Heart right ventricle (tissue), 16 donors: ENCODE measurements at regions of chr22 and their contacts with region 1.

Region 1: GRCh38 chr22:37544955-37545699 is 15.2 kb upstream of the CDC42EP1 start:
- DNase-seq: peak; percentile 77 to 81
- ATAC-seq: peak; percentile 37 to 75 (median 46)
- H3K4me3 ChIP-seq: peak overlapping the region in 7 of 10 donors; percentile 4 to 44 (median 35)
- H3K27ac ChIP-seq: peak overlapping the region; percentile 84 to 96 (median 92)
- H3K4me1 ChIP-seq: peaks cover 21 to 55% (median 44%) of the 10 kb centered on the region in 9 donors
- H3K27me3 ChIP-seq: peaks cover 0 to 2% (median 0%) of the 10 kb centered on the region in 7 donors
- CTCF ChIP-seq: peak; percentile 45 to 83 (median 75)

Region 2: DNA sequence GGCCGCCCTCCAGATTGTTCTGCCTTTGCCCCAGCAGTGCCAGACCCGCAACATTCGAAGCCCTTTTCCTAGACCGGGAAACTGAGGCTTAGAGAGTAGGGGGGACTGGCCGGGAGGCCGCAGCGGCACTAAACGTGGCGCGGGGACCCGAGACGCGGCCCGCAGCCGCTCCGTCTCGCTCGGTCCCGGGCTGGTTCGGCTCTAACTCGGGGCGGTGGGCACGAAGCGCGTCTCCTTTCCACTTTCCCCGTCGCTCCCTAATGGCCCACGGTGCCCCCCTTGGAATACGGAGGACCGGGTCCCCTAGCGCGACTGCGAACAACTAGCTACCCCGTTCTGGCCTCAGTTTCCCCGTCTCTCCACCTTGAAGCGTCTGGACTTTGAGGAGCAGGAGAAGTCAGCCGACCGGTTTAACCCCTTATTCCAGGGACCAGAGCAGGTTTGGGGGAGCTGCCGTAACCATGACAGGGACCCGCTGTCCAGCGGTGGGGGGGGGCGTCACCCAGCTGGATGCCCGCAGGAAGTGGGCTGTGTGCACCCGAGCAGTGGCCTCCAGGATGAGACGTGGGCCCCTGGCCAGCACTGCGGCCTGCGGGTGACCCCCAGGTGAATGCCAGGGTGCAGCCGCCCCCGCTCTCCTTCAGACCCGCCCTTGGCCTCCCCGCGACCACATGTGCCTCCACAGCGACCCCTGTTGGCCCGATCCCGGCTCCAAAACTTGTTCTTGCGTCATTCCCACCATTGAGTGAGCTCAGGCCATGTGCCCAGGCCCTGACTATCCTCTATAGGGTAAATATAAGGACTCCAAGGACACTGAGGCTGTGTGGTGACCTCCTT is 16.3 kb after region 1 on chr22:
- intact Hi-C with region 1: loop called in 7 of 10 experiments (anchors 1 to 2 kb)
- DNase-seq: peak; percentile 92 to 95
- ATAC-seq: peak; percentile 50 to 79 (median 72)
- H3K4me3 ChIP-seq: peak overlapping the region; percentile 61 to 92 (median 74)
- H3K27ac ChIP-seq: peak overlapping the region; percentile 96 to 100 (median 99)
- H3K4me1 ChIP-seq: peaks cover 20 to 91% (median 83%) of the 10 kb centered on the region in 9 donors
- H3K27me3 ChIP-seq: peaks cover 0 to 54% (median 4%) of the 10 kb centered on the region in 7 donors
- CTCF ChIP-seq: peak; percentile 67 to 91 (median 86)

Region 3: GRCh38 chr22:37566903-37567820 is 22.0 kb after region 1 on chr22:
- intact Hi-C with region 1: loop called in 5 of 10 experiments (anchors 1 to 2 kb)
- DNase-seq: peak; percentile 79 to 84
- ATAC-seq: peak; percentile 36 to 81 (median 60)
- H3K4me3 ChIP-seq: no peak overlapping the region
- H3K27ac ChIP-seq: peak overlapping the region in 9 of 10 donors; percentile 17 to 100 (median 96)
- H3K4me1 ChIP-seq: peaks cover 23 to 85% (median 62%) of the 10 kb centered on the region in 9 donors
- H3K27me3 ChIP-seq: peaks cover 0 to 11% (median 0%) of the 10 kb centered on the region in 7 donors
- CTCF ChIP-seq: peak; percentile 87 to 96 (median 94)

Region 4: DNA sequence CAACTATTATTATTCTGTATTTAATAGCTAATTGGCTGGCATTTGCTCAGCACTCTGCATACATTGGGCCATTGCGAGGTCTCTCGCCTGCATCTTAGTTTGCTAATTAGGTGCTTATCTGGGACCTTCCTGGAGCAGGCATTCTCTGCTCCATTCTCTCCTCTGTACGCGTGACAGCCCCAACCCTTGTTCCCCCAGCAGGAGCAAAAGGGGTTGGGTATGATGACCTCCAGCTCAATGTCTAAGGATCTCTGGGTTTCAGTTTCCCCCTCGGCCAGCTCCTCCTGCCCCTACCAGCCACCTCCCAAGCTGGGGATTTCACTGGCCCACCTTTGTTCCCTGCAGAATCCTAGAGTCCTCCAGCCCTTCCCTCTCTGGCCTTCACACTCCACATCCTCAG is 44.5 kb after region 1 on chr22:
- intact Hi-C with region 1: loop called in 3 of 10 experiments (anchors 2 to 5 kb)
- DNase-seq: no peak
- ATAC-seq: no peak
- H3K4me3 ChIP-seq: no peak overlapping the region
- H3K27ac ChIP-seq: peak overlapping the region in 1 of 10 donors; percentile 70
- H3K4me1 ChIP-seq: peaks cover 0 to 27% (median 3%) of the 10 kb centered on the region in 9 donors
- H3K27me3 ChIP-seq: no peaks in the 10 kb centered on the region
- CTCF ChIP-seq: no peak

Region 5: GRCh38 chr22:37599153-37599552 is 54.0 kb after region 1 on chr22:
- intact Hi-C with region 1: loop called in 1 of 10 experiments (anchors 5 kb)
- DNase-seq: peak in 1 of 2 donors; percentile 29
- ATAC-seq: peak in 5 of 8 donors; percentile 16 to 33 (median 27)
- H3K4me3 ChIP-seq: no peak overlapping the region
- H3K27ac ChIP-seq: no peak overlapping the region
- H3K4me1 ChIP-seq: peaks cover 0 to 8% (median 0%) of the 10 kb centered on the region in 9 donors
- H3K27me3 ChIP-seq: peaks cover 0 to 9% (median 0%) of the 10 kb centered on the region in 7 donors
- CTCF ChIP-seq: no peak

Region 6: DNA sequence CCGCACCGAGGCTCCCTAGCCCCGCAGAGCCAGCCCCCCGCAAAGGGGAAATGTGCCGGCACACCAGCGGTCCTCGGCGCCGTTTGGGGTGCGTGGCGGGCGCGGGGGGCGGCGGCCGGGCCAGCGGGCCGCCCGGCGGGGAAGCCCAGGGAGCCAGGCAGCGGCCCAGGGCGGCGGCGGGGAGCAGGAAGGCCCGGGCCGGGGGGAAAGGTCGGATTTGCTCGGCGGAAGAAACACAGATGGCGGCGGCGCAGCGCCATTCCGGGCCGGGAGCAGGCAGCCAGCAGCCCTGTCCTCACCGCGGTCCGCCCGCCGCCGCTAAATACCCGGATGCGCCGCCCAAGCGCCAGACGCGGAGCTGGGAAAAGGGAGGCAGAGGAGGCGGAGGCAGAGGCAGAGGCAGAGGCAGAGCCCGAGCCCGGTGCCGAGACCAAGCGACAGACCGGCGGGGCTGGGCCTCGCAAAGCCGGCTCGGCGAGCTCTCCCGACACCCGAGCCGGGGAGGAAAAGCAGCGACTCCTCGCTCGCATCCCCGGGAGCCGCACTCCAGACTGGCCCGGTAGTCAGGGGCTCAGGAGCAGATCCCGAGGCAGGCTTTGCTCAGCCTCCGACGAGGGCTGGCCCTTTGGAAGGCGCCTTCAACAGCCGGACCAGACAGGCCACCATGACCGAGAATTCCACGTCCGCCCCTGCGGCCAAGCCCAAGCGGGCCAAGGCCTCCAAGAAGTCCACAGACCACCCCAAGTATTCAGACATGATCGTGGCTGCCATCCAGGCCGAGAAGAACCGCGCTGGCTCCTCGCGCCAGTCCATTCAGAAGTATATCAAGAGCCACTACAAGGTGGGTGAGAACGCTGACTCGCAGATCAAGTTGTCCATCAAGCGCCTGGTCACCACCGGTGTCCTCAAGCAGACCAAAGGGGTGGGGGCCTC is 260.0 kb after region 1 on chr22:
- intact Hi-C with region 1: no loop called
- DNase-seq: peak; percentile 93
- ATAC-seq: peak; percentile 59 to 74 (median 68)
- H3K4me3 ChIP-seq: peak overlapping the region; percentile 54 to 85 (median 71)
- H3K27ac ChIP-seq: peak overlapping the region; percentile 83 to 96 (median 92)
- H3K4me1 ChIP-seq: peaks cover 8 to 67% (median 42%) of the 10 kb centered on the region in 9 donors
- H3K27me3 ChIP-seq: peaks cover 0 to 34% (median 0%) of the 10 kb centered on the region in 7 donors
- CTCF ChIP-seq: no peak